ENCODE measurements at regions of chr7 and their contacts with region 1.

Region 1: DNA sequence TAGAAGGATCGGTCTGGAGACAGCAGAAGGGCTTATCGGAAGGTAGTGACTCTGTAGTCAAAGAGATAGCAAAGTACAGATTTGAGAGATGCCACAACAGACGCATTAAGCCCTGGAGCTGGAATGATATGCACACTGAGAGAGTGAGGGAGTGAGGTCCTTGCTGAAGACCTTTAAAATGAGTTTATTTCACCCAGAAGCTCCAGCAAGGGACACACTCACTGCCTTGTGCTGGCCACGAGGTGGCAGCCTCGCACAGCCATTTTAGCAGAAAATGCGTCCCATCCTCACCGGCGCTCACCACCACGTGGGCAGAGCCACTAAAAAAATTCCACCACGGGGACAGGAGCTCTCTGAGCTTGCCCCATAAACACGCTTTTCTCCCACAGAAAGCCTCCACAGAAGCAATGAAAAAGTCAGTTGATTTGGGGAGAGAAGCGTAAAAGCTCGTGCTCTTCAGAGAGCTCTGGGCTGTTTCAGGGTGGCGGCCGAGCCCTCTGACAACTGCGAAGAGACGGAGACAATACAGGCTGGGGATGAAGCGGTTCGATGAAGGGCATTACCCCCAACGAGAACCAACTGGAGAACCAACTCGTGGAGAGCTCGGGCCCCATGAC is 163.0 kb upstream of the KLF14 start:
- DNase-seq: peak; percentile 75
- ATAC-seq: peak; percentile 76
- H3K4me3 Mint-ChIP-seq: no peak overlapping the region
- H3K27ac Mint-ChIP-seq: peak overlapping the region; percentile 81
- H3K4me1 Mint-ChIP-seq: peaks cover 56% of the 10 kb centered on the region
- H3K27me3 Mint-ChIP-seq: no peaks in the 10 kb centered on the region
- CTCF ChIP-seq: peak; percentile 70

Region 2: GRCh38 chr7:130845581-130846085 is 51.4 kb before region 1 on chr7:
- CTCF ChIA-PET with region 1: no interaction called
- POLR2A ChIA-PET with region 1: no interaction called
- DNase-seq: no peak
- ATAC-seq: no peak
- H3K4me3 Mint-ChIP-seq: no peak overlapping the region
- H3K27ac Mint-ChIP-seq: no peak overlapping the region
- H3K4me1 Mint-ChIP-seq: no peaks in the 10 kb centered on the region
- H3K27me3 Mint-ChIP-seq: no peaks in the 10 kb centered on the region; the same call in 1 of the 2 replicates
- CTCF ChIP-seq: no peak

Region 3: GRCh38 chr7:130880668-130881067 is 16.3 kb before region 1 on chr7:
- CTCF ChIA-PET with region 1: interaction called, 129 read pairs
- POLR2A ChIA-PET with region 1: no interaction called
- DNase-seq: no peak
- ATAC-seq: no peak
- H3K4me3 Mint-ChIP-seq: no peak overlapping the region
- H3K27ac Mint-ChIP-seq: no peak overlapping the region
- H3K4me1 Mint-ChIP-seq: peaks cover 39% of the 10 kb centered on the region
- H3K27me3 Mint-ChIP-seq: no peaks in the 10 kb centered on the region
- CTCF ChIP-seq: no peak

Region 4: GRCh38 chr7:130935564-130936157 is 38.7 kb after region 1 on chr7:
- CTCF ChIA-PET with region 1: interaction called, 22 read pairs
- POLR2A ChIA-PET with region 1: no interaction called
- DNase-seq: no peak
- ATAC-seq: no peak
- H3K4me3 Mint-ChIP-seq: no peak overlapping the region
- H3K27ac Mint-ChIP-seq: no peak overlapping the region; the same call in 1 of the 2 replicates
- H3K4me1 Mint-ChIP-seq: peaks cover 15% of the 10 kb centered on the region
- H3K27me3 Mint-ChIP-seq: no peaks in the 10 kb centered on the region
- CTCF ChIP-seq: no peak

Region 5: GRCh38 chr7:130970696-130971095 is 73.7 kb after region 1 on chr7:
- CTCF ChIA-PET with region 1: interaction called, 11 read pairs
- POLR2A ChIA-PET with region 1: no interaction called
- DNase-seq: no peak
- ATAC-seq: no peak
- H3K4me3 Mint-ChIP-seq: no peak overlapping the region
- H3K27ac Mint-ChIP-seq: no peak overlapping the region
- H3K4me1 Mint-ChIP-seq: no peaks in the 10 kb centered on the region
- H3K27me3 Mint-ChIP-seq: no peaks in the 10 kb centered on the region
- CTCF ChIP-seq: no peak

Region 6: GRCh38 chr7:131000873-131001272 is 103.9 kb after region 1 on chr7:
- CTCF ChIA-PET with region 1: interaction called, 11 read pairs
- POLR2A ChIA-PET with region 1: no interaction called
- DNase-seq: no peak
- ATAC-seq: peak; percentile 80
- H3K4me3 Mint-ChIP-seq: no peak overlapping the region
- H3K27ac Mint-ChIP-seq: no peak overlapping the region
- H3K4me1 Mint-ChIP-seq: peaks cover 7% of the 10 kb centered on the region; the same call in 1 of the 2 replicates
- H3K27me3 Mint-ChIP-seq: no peaks in the 10 kb centered on the region
- CTCF ChIP-seq: no peak

Region 7: GRCh38 chr7:131040467-131040932 is 143.5 kb after region 1 on chr7:
- CTCF ChIA-PET with region 1: interaction called, 51 read pairs
- POLR2A ChIA-PET with region 1: no interaction called
- DNase-seq: peak; percentile 60
- ATAC-seq: peak; percentile 77
- H3K4me3 Mint-ChIP-seq: no peak overlapping the region
- H3K27ac Mint-ChIP-seq: peak overlapping the region; percentile 73
- H3K4me1 Mint-ChIP-seq: peaks cover 25% of the 10 kb centered on the region
- H3K27me3 Mint-ChIP-seq: no peaks in the 10 kb centered on the region
- CTCF ChIP-seq: peak; percentile 63

Measured in WTC11 (cell line).